ENCODE measurements at regions of chr4 and their contacts with region 1.

Region 1: DNA sequence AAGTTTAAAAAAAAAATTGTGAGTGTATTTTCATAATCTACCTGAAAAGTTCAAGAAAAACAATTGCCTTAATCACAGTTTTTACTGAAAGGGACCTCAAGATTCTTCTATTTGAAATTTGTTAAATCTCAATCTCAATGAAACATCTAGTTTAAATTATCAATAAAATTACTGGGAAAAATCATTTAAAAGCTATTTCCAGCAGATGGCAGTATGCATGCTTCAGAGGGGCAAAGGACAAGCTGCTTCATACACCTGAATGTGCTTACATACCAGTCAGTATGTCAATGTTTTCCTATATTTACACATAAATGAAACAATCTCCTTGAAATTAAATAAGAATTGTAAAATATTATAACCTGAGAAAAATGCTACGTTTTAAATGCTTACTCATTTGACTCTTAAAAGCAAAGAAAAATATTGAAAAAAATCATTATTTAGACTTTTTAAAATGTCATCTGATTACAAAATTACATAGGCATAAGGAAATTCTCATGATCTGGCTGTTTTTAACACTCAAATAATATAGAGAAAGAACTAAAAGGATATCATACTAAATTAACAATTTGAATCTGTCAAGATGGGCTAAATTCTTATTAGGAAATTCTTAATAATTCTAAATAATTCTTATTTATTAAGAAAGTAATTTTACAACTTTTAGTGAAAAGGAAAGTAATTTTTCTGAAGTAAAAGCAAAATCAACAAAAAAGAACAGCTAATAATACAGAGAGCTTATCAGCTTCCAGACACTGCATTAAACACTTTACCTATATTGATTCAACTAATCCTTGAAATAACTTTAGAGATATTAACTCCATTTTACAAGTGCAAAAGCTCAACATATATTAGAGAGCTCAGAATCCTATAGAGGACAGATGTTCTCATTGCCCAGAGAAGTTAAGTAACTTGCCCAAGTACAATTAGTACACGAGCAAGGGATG is 242.1 kb downstream of the ADAMTS3 start:
- DNase-seq: peak in 1 of 9 donors; percentile 12
- ATAC-seq: no peak
- H3K4me3 ChIP-seq: no peak overlapping the region
- H3K4me3 Mint-ChIP-seq: no peak overlapping the region
- H3K27ac ChIP-seq: no peak overlapping the region
- H3K27ac Mint-ChIP-seq: no peak overlapping the region
- H3K4me1 ChIP-seq: no peaks in the 10 kb centered on the region
- H3K4me1 Mint-ChIP-seq: no peaks in the 10 kb centered on the region
- H3K27me3 ChIP-seq: no peaks in the 10 kb centered on the region
- H3K27me3 Mint-ChIP-seq: peaks cover 0 to 22% (median 10%) of the 10 kb centered on the region in 5 donors

Region 2: GRCh38 chr4:72374159-72374558 is 47.2 kb after region 1 on chr4:
- CTCF ChIA-PET with region 1: interaction called, 13 read pairs
- POLR2A ChIA-PET with region 1: no interaction called
- intact Hi-C with region 1: no loop called
- DNase-seq: no peak
- ATAC-seq: no peak
- H3K4me3 ChIP-seq: no peak overlapping the region
- H3K4me3 Mint-ChIP-seq: no peak overlapping the region
- H3K27ac ChIP-seq: no peak overlapping the region
- H3K27ac Mint-ChIP-seq: no peak overlapping the region
- H3K4me1 ChIP-seq: no peaks in the 10 kb centered on the region
- H3K4me1 Mint-ChIP-seq: peaks cover 0 to 3% (median 0%) of the 10 kb centered on the region in 7 donors
- H3K27me3 ChIP-seq: no peaks in the 10 kb centered on the region
- H3K27me3 Mint-ChIP-seq: no peaks in the 10 kb centered on the region

Region 3: DNA sequence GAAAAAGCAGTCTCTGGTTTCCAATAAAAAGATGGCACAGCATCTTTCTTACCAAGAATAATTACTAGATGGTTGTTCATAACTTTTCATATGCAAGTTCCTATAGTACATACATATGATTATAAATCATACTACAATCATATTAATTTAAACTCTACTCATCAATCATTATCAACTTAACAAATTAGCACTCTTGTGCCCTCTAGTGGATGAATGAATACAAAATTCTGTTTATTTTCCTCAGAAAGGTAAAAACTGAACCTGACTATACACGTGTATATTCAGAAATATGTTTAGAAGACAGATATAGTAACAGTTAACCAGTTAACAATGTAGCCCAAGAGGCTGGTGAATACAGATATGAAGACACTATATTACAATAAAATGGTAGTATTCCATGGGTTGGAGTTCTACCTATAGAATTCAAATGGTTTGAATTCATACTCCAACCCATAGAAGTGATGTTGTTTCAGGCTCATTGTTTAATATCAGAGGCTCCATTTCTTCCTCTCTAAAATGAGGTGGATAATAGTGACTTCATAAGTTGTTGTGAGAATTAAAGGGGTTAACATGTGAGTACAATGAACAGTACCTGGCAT is 142.0 kb after region 1 on chr4:
- CTCF ChIA-PET with region 1: no interaction called
- POLR2A ChIA-PET with region 1: no interaction called
- intact Hi-C with region 1: loop called in 1 of 2 experiments (anchors 10 kb)
- DNase-seq: no peak
- ATAC-seq: no peak
- H3K4me3 ChIP-seq: no peak overlapping the region
- H3K4me3 Mint-ChIP-seq: no peak overlapping the region
- H3K27ac ChIP-seq: no peak overlapping the region
- H3K27ac Mint-ChIP-seq: no peak overlapping the region
- H3K4me1 ChIP-seq: no peaks in the 10 kb centered on the region
- H3K4me1 Mint-ChIP-seq: no peaks in the 10 kb centered on the region
- H3K27me3 ChIP-seq: no peaks in the 10 kb centered on the region
- H3K27me3 Mint-ChIP-seq: peaks cover 0 to under 1% (median 0%) of the 10 kb centered on the region in 5 donors

Region 4: GRCh38 chr4:73019462-73020047 is 692.6 kb after region 1 on chr4:
- CTCF ChIA-PET with region 1: no interaction called
- POLR2A ChIA-PET with region 1: no interaction called
- intact Hi-C with region 1: loop called in 1 of 2 experiments (anchors 2 kb)
- DNase-seq: peak in 6 of 9 donors; percentile 2 to 33 (median 20)
- ATAC-seq: no peak
- H3K4me3 ChIP-seq: no peak overlapping the region
- H3K4me3 Mint-ChIP-seq: no peak overlapping the region
- H3K27ac ChIP-seq: no peak overlapping the region
- H3K27ac Mint-ChIP-seq: no peak overlapping the region
- H3K4me1 ChIP-seq: no peaks in the 10 kb centered on the region
- H3K4me1 Mint-ChIP-seq: peaks cover 0 to 1% (median 0%) of the 10 kb centered on the region in 7 donors
- H3K27me3 ChIP-seq: no peaks in the 10 kb centered on the region
- H3K27me3 Mint-ChIP-seq: peaks cover 0 to 11% (median 8%) of the 10 kb centered on the region in 5 donors

Measured in naive thymus-derived CD4-positive, alpha-beta T cell (primary cell).